Tibial artery (tissue), 4 donors: ENCODE measurements at regions of chr6 and their contacts with region 1.

Region 1: DNA sequence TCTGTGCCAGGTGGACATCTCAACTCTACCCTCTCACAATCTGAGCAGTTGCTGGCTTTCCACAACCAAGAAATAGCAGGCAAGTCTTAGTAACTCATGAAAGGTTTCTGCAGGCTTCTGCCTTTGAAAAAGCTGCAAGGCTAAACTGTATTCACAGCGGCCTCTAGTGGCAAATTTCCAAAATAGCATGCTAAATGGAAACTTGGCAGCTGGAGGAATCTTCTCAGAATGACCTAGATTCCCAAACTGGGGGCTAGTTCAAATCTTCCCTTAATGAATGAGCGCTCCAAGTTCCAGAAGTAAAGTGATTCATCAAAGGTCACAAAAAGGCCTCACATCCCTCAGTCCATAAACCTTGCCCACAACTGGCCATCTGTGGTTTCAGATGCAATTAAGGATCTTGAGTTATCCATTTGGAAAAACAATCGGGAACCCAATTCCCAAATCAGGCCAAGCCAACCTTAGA is 11.9 kb upstream of the CPNE5 start:
- DNase-seq: peak; percentile 44 to 68
- H3K4me3 ChIP-seq: no peak overlapping the region
- H3K27ac ChIP-seq: peak overlapping the region; percentile 23 to 78
- H3K4me1 ChIP-seq: peaks cover 0 to 37% (median 28%) of the 10 kb centered on the region in 4 donors
- H3K27me3 ChIP-seq: no peaks in the 10 kb centered on the region
- CTCF ChIP-seq: peak; percentile 64 to 65

Region 2: GRCh38 chr6:36563237-36563927 is 287.8 kb before region 1 on chr6:
- intact Hi-C with region 1: no loop called
- DNase-seq: no peak
- H3K4me3 ChIP-seq: no peak overlapping the region
- H3K27ac ChIP-seq: no peak overlapping the region
- H3K4me1 ChIP-seq: no peaks in the 10 kb centered on the region
- H3K27me3 ChIP-seq: no peaks in the 10 kb centered on the region
- CTCF ChIP-seq: no peak

Region 3: GRCh38 chr6:36678518-36679027 is 172.6 kb before region 1 on chr6 and contains the start of gene CDKN1A:
- intact Hi-C with region 1: loop called (anchors 10 kb)
- DNase-seq: peak; percentile 93 to 98
- H3K4me3 ChIP-seq: peak within 1 kb of the TSS; percentile 95 to 99
- H3K27ac ChIP-seq: peak within 1 kb of the TSS; percentile 99 to 100
- H3K4me1 ChIP-seq: peaks cover 0 to 55% (median 41%) of the 10 kb centered on the region in 4 donors
- H3K27me3 ChIP-seq: no peaks in the 10 kb centered on the region
- CTCF ChIP-seq: peak in 1 of 2 experiments; percentile 31

Region 4: DNA sequence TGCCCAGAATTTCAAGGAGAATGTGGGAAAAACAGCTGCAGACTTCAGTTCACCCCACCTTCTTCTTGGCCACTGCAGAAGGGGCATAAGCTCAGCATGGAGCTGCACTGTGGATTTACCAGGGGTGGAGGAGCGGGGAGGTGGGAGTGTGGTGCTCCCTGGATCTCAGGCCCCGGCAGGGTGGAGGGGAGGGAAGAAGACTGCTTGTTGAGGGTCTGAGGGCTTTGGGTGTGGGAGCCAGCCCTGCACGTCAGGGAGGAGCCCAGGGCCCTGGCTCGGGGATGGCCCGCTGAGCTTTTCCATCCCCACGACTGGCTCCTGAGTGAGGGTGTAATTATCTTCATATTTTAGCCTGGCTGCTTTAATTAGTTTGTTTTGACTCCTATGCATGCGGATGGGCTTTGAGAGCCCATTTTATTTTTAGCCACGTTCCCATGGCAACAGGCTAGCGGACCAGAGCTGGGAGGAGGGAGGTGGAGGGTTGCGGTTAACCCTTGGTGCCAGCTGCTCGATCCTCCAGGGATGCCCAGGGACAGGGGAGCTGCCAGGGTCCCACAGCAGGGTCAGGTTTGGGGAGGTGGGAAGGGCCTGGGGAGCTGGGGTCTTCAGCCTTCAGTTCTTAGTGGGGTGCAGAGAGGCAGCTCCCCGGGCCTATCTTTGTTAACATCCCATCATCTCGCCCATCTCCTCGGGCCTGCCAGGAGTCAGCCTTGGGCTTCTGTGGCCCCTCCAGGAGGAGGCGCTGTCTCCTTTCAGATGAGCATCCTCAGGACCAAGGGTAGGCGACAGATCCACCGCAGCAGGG is 85.4 kb before region 1 on chr6:
- intact Hi-C with region 1: loop called (anchors 5 kb)
- DNase-seq: peak; percentile 76 to 88
- H3K4me3 ChIP-seq: no peak overlapping the region
- H3K27ac ChIP-seq: no peak overlapping the region
- H3K4me1 ChIP-seq: peaks cover 0 to 14% (median 10%) of the 10 kb centered on the region in 4 donors
- H3K27me3 ChIP-seq: no peaks in the 10 kb centered on the region
- CTCF ChIP-seq: peak; percentile 77 to 90